Mammary epithelial cell (primary cell): ENCODE measurements at regions of chr15 and their contacts with region 1.

Region 1: GRCh38 chr15:60585743-60586708 is 107.1 kb upstream of the ICE2 start:
- DNase-seq: peak; percentile 49
- H3K4me3 ChIP-seq: no peak overlapping the region
- H3K27ac ChIP-seq: no peak overlapping the region
- H3K4me1 ChIP-seq: peaks cover 9% of the 10 kb centered on the region
- H3K27me3 ChIP-seq: no peaks in the 10 kb centered on the region
- CTCF ChIP-seq: peak; percentile 85 to 95

Region 2: GRCh38 chr15:60633426-60633968 is 47.5 kb after region 1 on chr15:
- CTCF ChIA-PET with region 1: no interaction called
- dilution Hi-C with region 1: no loop called
- in situ Hi-C with region 1: no loop called
- intact Hi-C with region 1: no loop called
- DNase-seq: no peak
- H3K4me3 ChIP-seq: no peak overlapping the region
- H3K27ac ChIP-seq: no peak overlapping the region
- H3K4me1 ChIP-seq: no peaks in the 10 kb centered on the region
- H3K27me3 ChIP-seq: no peaks in the 10 kb centered on the region
- CTCF ChIP-seq: no peak

Region 3: DNA sequence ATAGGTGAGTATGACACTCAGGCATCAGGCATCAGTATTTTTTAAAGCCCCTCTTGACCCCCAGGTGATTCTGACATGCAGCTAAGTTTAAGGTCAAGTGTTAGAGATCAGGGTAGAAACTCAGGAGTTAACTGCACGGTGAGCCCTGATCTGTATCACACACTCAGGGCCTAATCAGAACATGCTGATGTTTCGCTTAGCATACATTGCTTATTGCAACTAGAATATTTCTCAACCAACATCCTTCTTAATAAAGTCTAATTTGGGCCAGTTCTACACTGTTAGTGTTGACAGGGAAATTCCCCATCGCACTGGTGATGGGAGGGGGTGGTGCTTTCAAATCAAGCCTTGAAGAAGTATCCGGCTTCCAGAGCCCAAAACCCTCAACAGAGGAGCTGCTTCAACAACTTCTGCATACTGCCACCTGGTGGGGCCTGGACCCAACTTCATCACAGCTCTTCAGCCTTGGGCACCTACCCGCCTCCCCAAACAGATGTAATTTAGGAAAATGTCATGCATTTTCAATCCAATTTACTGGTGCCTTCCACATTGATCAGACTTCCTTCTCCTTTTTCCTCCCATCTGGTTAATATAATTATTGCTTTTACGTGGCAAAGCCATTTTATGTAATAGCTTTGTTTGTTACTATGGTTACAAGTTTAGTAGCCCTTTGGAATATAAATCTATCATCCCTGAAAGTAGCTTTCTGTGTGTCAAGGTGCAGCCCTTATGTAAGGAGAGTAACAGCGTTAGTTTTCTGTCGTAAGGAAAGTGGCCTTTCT is 330.8 kb after region 1 on chr15:
- CTCF ChIA-PET with region 1: interaction called, 20 read pairs
- dilution Hi-C with region 1: no loop called
- in situ Hi-C with region 1: loop called in 1 of 2 experiments (anchors 5 kb)
- intact Hi-C with region 1: loop called (anchors 1 kb)
- DNase-seq: peak; percentile 57
- H3K4me3 ChIP-seq: no peak overlapping the region
- H3K27ac ChIP-seq: no peak overlapping the region
- H3K4me1 ChIP-seq: no peaks in the 10 kb centered on the region
- H3K27me3 ChIP-seq: no peaks in the 10 kb centered on the region
- CTCF ChIP-seq: peak; percentile 68 to 85

Region 4: DNA sequence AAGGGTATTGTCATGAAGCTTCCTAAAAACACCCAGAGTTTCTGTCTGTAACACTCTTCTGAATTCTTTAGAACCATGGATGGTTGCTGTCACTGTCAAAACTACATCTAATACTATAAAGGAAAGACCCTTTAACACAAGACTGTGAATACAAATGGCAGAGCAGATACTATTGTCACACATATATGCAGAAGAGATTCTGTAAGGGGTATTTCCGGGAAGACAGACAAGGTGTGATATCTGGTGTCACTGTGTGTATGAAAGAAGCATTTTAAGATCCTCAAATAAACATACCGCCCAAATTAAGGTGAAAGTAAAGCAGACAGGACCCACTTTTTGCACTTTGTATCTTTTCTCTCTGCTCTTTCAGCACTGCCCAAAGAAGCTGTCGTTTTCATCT is 336.7 kb after region 1 on chr15:
- CTCF ChIA-PET with region 1: no interaction called
- dilution Hi-C with region 1: no loop called
- in situ Hi-C with region 1: loop called in 1 of 2 experiments (anchors 5 kb)
- intact Hi-C with region 1: loop called (anchors 1 kb)
- DNase-seq: no peak
- H3K4me3 ChIP-seq: no peak overlapping the region
- H3K27ac ChIP-seq: no peak overlapping the region
- H3K4me1 ChIP-seq: no peaks in the 10 kb centered on the region
- H3K27me3 ChIP-seq: no peaks in the 10 kb centered on the region
- CTCF ChIP-seq: no peak

Region 5: GRCh38 chr15:60932051-60932915 is 346.3 kb after region 1 on chr15:
- CTCF ChIA-PET with region 1: interaction called, 3 read pairs
- dilution Hi-C with region 1: no loop called
- in situ Hi-C with region 1: loop called in 1 of 2 experiments (anchors 5 kb)
- intact Hi-C with region 1: loop called (anchors 1 kb)
- DNase-seq: peak; percentile 93
- H3K4me3 ChIP-seq: peak overlapping the region in 1 of 3 experiments; percentile 23
- H3K27ac ChIP-seq: no peak overlapping the region
- H3K4me1 ChIP-seq: peaks cover 26% of the 10 kb centered on the region
- H3K27me3 ChIP-seq: peaks cover 3% of the 10 kb centered on the region
- CTCF ChIP-seq: peak; percentile 68 to 79